PC-9 (cell line): ENCODE measurements at regions of chr11 and their contacts with region 1.

Region 1: DNA sequence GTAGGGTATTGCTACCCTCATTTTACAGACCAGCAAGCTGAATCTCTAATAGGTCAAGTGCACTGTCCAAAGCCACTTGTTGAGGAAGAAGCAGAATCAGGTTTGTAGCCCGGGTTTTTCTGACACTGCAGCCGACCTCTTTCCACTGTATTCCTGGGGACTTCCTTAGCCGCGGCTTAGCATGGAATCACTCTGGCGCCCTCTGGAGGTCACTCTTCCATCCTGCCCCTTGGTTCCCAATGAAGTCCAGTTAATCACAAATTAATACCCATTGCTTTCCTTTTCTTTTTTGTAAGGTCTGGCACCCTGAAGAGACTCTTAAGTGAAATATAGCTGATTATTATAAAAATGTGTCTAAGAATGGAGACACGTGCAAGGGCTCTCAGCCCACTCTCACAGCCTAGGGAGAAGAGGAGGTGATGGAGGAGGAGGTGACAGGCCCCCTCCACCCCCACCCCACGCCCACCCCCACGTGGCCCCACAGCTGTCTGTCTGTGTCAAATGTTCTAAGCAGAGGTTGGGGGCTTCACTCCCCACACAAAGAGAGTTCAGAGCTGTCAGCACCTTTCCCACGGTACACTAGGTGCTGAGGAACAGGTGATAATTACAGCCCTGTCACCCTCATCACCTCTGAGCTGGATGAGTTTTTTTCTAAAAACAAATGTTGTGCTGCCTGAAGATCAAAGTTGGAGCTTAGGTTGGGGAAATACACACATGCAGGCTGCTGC is 57.7 kb upstream of the DRD2 start:
- DNase-seq: peak in 1 of 2 experiments; percentile 57
- H3K4me3 ChIP-seq: no peak overlapping the region
- H3K27ac ChIP-seq: no peak overlapping the region
- H3K4me1 ChIP-seq: no peaks in the 10 kb centered on the region
- H3K27me3 ChIP-seq: peaks cover 51% of the 10 kb centered on the region
- CTCF ChIP-seq: peak; percentile 90

Region 2: DNA sequence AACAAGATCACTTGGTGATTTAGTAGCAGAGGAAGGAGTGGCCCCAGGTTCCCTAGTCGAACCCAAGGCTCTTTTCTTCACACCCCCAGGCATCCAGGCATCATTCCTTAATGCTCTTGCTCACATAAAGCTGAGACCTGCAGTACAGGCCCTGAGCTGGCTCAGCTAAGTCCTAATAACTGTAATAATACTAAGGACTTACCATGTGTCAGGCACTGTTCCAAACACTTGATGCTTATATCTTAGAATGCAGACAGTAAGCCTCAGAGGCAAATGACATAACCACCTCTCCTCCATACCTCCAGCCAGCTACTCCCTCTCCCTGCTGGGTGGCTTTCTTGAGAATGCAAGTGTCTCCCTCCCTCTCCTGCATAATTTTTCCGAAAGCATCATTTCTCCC is 112.1 kb before region 1 on chr11:
- CTCF ChIA-PET with region 1: no interaction called
- POLR2A ChIA-PET with region 1: no interaction called
- intact Hi-C with region 1: no loop called
- DNase-seq: no peak
- H3K4me3 ChIP-seq: no peak overlapping the region
- H3K27ac ChIP-seq: no peak overlapping the region
- H3K4me1 ChIP-seq: no peaks in the 10 kb centered on the region
- H3K27me3 ChIP-seq: peaks cover 99% of the 10 kb centered on the region
- CTCF ChIP-seq: no peak

Region 3: DNA sequence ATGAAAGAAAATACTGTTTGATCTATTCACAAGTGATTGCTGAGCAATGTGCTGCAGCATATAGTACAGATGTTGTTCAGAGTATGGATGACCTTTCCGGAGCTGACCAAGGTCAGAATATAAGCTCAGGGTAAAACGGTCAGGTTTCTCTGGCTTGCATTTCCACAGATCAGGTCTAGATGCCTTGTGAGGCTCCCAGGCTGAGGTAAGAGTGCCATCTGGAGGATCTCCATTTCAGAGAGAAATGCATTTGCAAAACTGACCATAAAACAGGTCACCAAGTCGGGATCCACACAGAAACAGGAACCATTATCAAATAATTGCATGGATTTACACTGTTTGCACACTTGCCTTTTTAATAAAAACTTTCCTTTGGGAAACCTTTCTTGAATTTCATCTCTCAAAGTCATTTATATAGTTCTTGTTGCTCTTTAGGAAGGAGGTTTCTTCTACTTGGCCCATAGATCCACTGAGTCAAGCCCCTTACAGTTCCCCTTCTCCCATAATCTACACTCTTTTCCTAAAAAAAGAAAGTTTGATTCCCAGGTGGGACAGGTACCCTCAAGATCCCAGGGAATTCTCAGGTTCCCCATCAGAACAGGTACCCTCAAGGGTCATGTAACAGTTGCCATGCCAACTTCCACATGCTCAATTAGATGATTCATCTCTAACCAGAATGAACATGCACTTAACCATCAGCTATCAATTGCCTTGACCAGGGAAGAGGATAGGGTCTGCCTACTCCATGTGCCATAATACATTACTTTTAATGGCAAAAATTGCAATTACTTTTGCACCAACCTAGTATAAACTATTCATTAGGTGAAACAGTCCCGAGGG is 198.2 kb after region 1 on chr11:
- CTCF ChIA-PET with region 1: no interaction called
- POLR2A ChIA-PET with region 1: no interaction called
- intact Hi-C with region 1: loop called (anchors 2 kb)
- DNase-seq: peak in 1 of 2 experiments; percentile 25
- H3K4me3 ChIP-seq: no peak overlapping the region
- H3K27ac ChIP-seq: no peak overlapping the region
- H3K4me1 ChIP-seq: no peaks in the 10 kb centered on the region
- H3K27me3 ChIP-seq: no peaks in the 10 kb centered on the region
- CTCF ChIP-seq: peak; percentile 67

Region 4: GRCh38 chr11:114059278-114059983 is 526.6 kb after region 1 on chr11 and contains the start of gene ZBTB16:
- CTCF ChIA-PET with region 1: no interaction called
- POLR2A ChIA-PET with region 1: no interaction called
- intact Hi-C with region 1: no loop called
- DNase-seq: no peak
- H3K4me3 ChIP-seq: no peak within 1 kb of the TSS
- H3K27ac ChIP-seq: no peak within 1 kb of the TSS
- H3K4me1 ChIP-seq: no peaks in the 10 kb centered on the region
- H3K27me3 ChIP-seq: peaks cover 67% of the 10 kb centered on the region
- CTCF ChIP-seq: no peak
- total RNA-seq, gene ZBTB16: 0.25 and 0.44 TPM in 2 replicates